ENCODE measurements at regions of chr2 and their contacts with region 1.

Region 1: DNA sequence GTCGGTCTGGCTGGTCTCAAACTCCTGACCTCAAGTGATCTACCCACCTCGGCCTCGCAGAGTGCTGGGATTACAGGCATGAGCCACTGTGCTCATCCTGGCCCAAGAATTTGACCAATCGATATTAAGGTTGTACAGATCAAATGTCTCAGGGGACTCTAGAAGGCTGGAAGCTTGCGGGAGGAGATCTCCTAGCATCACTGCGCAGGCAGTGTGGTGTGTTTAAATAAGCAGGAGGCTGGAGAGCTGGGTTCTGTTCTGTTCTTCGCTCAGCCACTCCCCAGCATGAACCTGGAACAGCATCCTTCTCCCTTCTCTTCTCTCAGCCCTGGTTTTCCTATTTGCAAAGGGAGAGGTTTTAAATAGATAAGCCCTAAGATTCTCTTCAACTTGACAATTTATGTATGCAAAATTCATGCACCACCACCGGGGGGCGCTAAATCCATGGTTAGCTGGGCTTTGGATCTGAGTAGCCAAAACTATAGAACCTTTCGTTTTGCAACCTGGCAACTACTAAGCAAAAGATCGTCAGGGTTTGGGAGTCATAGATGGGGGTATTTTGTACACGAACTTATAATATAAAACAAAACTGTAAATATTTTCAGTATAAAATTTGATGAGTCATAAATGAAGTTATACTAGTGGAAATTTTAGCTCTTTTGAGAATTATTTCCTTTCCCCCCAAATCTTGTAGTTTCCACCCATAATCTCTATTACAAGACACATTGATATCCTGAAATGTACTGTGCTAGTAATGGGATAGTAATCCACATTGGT is 60.6 kb downstream of the SLC16A14 start:
- DNase-seq: peak; percentile 51
- H3K4me3 ChIP-seq: no peak overlapping the region
- H3K27ac ChIP-seq: no peak overlapping the region
- H3K27me3 ChIP-seq: no peaks in the 10 kb centered on the region
- CTCF ChIP-seq: peak; percentile 87

Region 2: GRCh38 chr2:229980431-229981184 is 27.5 kb before region 1 on chr2:
- CTCF ChIA-PET with region 1: interaction called, 11 read pairs
- POLR2A ChIA-PET with region 1: no interaction called
- DNase-seq: peak; percentile 26
- H3K4me3 ChIP-seq: no peak overlapping the region; the same call in 1 of the 2 replicates
- H3K27ac ChIP-seq: peak overlapping the region; percentile 65
- H3K27me3 ChIP-seq: no peaks in the 10 kb centered on the region
- CTCF ChIP-seq: no peak

Region 3: DNA sequence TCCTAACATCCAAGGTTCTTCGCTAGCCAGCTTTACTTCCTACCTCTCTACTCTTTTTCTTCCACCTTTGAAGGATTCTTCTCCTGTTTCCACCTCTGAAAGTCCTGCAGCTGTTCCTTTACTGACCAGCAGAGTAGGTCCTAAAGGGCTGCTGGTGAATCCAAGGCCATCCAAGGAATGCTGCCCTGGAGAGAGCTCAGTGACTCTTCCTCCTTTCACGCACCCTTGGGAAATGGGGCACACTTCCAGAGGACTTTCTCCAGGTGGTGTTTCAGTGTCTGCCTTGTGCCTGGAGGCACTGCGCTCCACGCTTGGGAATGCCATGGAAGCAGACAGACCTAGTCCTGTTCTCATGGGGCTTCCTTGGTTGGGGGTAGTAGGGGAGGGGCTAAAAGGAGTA is 15.2 kb after region 1 on chr2:
- CTCF ChIA-PET with region 1: interaction called, 23 read pairs
- POLR2A ChIA-PET with region 1: no interaction called
- DNase-seq: no peak
- H3K4me3 ChIP-seq: no peak overlapping the region
- H3K27ac ChIP-seq: no peak overlapping the region
- H3K27me3 ChIP-seq: no peaks in the 10 kb centered on the region
- CTCF ChIP-seq: no peak

Measured in AG04450 (cell line).